Endothelial cell of umbilical vein (primary cell): ENCODE measurements at regions of chr1 and their contacts with region 1.

Region 1: DNA sequence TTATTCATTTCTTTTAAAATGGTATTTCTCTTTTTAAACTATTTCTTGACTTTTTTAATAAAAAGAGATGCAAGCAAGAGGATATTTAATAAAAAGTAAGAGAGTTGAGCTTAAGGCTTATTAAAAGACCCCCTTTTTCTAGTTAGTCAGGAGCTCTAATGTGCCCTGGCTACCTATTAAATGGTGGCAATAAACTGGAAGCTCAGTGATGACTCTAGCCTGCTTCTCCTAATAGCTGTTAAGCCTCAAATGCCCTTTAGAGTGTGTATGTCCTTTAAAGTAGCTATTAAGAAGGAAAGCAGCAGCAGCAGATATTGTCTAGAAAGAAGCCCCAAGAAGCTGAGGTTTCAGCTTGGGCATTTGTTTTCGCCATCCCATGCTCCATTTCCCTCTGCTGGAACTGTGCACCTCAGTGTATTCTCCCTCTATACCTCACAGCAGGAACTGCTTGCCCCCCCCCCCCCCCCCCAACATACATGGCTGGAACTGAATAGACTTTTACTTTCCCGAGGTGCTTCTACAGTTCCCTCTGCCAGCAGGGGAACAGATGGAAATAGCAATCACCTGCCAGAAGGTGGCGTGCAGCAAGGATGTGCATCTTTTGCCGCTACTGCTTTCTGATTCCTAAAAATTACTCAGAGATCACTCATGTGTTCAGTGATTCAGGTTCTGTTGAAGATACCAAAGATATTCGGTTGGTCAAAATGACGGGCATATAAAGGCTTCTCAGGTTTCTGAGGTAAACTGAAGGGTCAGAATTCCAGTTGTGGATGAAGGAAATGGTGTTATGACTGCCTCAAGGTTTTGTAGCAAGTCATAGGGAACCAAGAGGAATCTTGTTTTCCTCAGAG is 2.5 kb downstream of the RGS4 start:
- DNase-seq: peak; percentile 88
- H3K4me3 ChIP-seq: peak overlapping the region in 2 of 3 experiments; percentile 30 to 98
- H3K27ac ChIP-seq: peak overlapping the region; percentile 69
- H3K4me1 ChIP-seq: peaks cover 44% of the 10 kb centered on the region
- H3K27me3 ChIP-seq: no peaks in the 10 kb centered on the region
- CTCF ChIP-seq: peak; percentile 68 to 79
- POLR2A ChIP-seq: no peak

Region 2: DNA sequence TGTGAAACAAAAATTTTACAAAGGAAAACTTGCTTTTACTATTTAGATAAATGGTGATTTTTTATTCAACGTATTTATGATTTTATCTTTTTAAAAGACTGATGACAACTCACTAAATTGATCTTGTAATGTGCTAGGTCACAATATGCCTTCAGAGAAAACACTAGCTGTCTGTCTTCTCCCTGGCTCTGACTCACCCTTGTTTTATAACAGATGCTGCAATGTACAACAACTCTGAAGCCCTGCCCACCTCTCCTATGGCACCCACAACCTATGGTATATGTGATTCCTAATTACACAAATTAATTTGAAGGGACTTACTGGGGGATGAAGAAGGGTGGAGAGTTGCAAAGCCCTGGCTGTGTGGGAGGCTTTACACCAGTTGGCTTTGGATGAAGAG is 305.8 kb before region 1 on chr1:
- CTCF ChIA-PET with region 1: no interaction called
- POLR2A ChIA-PET with region 1: no interaction called
- dilution Hi-C with region 1: no loop called
- intact Hi-C with region 1: no loop called
- DNase-seq: no peak
- H3K4me3 ChIP-seq: no peak overlapping the region
- H3K27ac ChIP-seq: no peak overlapping the region
- H3K4me1 ChIP-seq: no peaks in the 10 kb centered on the region
- H3K27me3 ChIP-seq: no peaks in the 10 kb centered on the region
- CTCF ChIP-seq: no peak
- POLR2A ChIP-seq: no peak

Region 3: GRCh38 chr1:162847839-162848453 is 223.7 kb before region 1 on chr1:
- CTCF ChIA-PET with region 1: interaction called, 57 read pairs
- POLR2A ChIA-PET with region 1: no interaction called
- dilution Hi-C with region 1: loop called (anchors 25 kb)
- intact Hi-C with region 1: loop called (anchors 1 kb)
- DNase-seq: peak; percentile 78
- H3K4me3 ChIP-seq: no peak overlapping the region
- H3K27ac ChIP-seq: no peak overlapping the region
- H3K4me1 ChIP-seq: no peaks in the 10 kb centered on the region
- H3K27me3 ChIP-seq: no peaks in the 10 kb centered on the region
- CTCF ChIP-seq: peak; percentile 78 to 82
- POLR2A ChIP-seq: no peak

Region 4: DNA sequence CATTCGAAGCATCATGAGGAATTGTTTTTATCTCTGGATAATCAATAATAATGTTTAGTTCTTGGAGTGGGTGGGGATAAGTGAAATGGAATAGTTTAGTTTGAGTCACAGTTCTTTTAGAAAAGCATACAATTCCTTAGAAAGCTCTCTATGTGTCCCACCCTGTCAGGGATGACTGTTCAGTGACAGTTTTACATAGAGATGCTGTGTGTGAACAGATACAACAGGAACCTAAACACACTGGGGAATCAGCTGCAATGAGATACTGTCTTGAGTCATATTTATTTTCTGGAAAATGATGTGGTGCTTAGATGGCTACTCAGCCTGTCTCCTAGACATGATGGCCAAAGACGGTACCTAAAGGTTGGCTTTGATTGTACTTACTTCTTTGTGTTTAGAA is 184.9 kb before region 1 on chr1:
- CTCF ChIA-PET with region 1: interaction called, 15 read pairs
- POLR2A ChIA-PET with region 1: no interaction called
- dilution Hi-C with region 1: no loop called
- intact Hi-C with region 1: no loop called
- DNase-seq: no peak
- H3K4me3 ChIP-seq: no peak overlapping the region
- H3K27ac ChIP-seq: no peak overlapping the region
- H3K4me1 ChIP-seq: no peaks in the 10 kb centered on the region
- H3K27me3 ChIP-seq: no peaks in the 10 kb centered on the region
- CTCF ChIP-seq: no peak
- POLR2A ChIP-seq: no peak

Region 5: DNA sequence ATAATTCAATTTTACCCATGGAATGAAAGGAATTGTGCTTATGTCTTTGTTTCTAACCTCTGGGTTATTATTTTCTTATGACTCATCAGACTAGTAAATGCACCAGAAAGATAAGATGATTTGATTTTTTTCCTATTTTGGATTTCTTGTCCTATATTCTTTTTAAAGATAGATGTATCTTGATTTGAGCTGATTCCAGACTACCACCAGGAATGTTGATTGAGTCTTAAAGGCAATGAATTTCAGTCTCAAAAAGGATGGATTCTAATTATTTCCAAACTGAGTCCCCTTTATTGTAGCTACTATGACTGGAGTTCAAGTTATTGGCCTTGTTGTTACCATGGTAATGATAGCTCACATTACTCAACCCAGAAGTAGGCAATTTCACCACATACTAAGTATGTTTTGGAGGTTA is 98.2 kb before region 1 on chr1:
- CTCF ChIA-PET with region 1: interaction called, 13 read pairs
- POLR2A ChIA-PET with region 1: no interaction called
- dilution Hi-C with region 1: no loop called
- intact Hi-C with region 1: no loop called
- DNase-seq: peak; percentile 84
- H3K4me3 ChIP-seq: no peak overlapping the region
- H3K27ac ChIP-seq: peak overlapping the region; percentile 46
- H3K4me1 ChIP-seq: peaks cover 12% of the 10 kb centered on the region
- H3K27me3 ChIP-seq: no peaks in the 10 kb centered on the region
- CTCF ChIP-seq: no peak
- POLR2A ChIP-seq: no peak

Region 6: DNA sequence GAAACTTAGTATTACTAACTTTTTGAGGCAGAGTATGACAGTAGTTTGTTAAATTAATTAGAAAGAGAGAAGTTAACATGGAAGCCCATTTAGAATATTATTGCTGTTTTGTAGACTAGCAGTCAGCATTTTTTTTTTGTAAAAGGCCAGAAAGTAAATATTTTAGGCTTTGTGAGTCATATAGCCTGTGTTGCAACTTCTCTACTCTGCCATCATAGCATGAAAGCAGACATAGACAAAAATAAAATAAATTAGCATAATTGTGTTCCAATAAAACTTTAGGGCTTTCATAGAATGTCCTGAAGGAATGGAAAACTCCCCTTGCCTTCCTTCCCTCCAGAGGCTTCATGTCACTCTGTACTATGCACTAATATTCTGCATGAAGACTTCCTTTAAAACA is 14.8 kb before region 1 on chr1:
- CTCF ChIA-PET with region 1: interaction called, 15 read pairs
- POLR2A ChIA-PET with region 1: no interaction called
- dilution Hi-C with region 1: no loop called
- intact Hi-C with region 1: no loop called
- DNase-seq: no peak
- H3K4me3 ChIP-seq: no peak overlapping the region
- H3K27ac ChIP-seq: no peak overlapping the region
- H3K4me1 ChIP-seq: no peaks in the 10 kb centered on the region
- H3K27me3 ChIP-seq: no peaks in the 10 kb centered on the region
- CTCF ChIP-seq: no peak
- POLR2A ChIP-seq: no peak

Region 7: GRCh38 chr1:163168053-163168452 is 96.4 kb after region 1 on chr1:
- CTCF ChIA-PET with region 1: interaction called, 24 read pairs
- POLR2A ChIA-PET with region 1: no interaction called
- dilution Hi-C with region 1: no loop called
- intact Hi-C with region 1: loop called (anchors 1 kb)
- DNase-seq: peak; percentile 98
- H3K4me3 ChIP-seq: no peak overlapping the region
- H3K27ac ChIP-seq: peak overlapping the region; percentile 83
- H3K4me1 ChIP-seq: peaks cover 84% of the 10 kb centered on the region
- H3K27me3 ChIP-seq: no peaks in the 10 kb centered on the region
- CTCF ChIP-seq: no peak
- POLR2A ChIP-seq: no peak